A673 (cell line): ENCODE measurements at regions of chr14 and their contacts with region 1.

Region 1: GRCh38 chr14:64764641-64765520 is 60.7 kb downstream of the PLEKHG3 start:
- DNase-seq: peak; percentile 91
- H3K4me3 ChIP-seq: peak overlapping the region; percentile 38
- H3K27ac ChIP-seq: peak overlapping the region; percentile 56
- H3K4me1 ChIP-seq: peaks cover 42% of the 10 kb centered on the region
- H3K27me3 ChIP-seq: no peaks in the 10 kb centered on the region
- CTCF ChIP-seq: peak; percentile 87

Region 2: DNA sequence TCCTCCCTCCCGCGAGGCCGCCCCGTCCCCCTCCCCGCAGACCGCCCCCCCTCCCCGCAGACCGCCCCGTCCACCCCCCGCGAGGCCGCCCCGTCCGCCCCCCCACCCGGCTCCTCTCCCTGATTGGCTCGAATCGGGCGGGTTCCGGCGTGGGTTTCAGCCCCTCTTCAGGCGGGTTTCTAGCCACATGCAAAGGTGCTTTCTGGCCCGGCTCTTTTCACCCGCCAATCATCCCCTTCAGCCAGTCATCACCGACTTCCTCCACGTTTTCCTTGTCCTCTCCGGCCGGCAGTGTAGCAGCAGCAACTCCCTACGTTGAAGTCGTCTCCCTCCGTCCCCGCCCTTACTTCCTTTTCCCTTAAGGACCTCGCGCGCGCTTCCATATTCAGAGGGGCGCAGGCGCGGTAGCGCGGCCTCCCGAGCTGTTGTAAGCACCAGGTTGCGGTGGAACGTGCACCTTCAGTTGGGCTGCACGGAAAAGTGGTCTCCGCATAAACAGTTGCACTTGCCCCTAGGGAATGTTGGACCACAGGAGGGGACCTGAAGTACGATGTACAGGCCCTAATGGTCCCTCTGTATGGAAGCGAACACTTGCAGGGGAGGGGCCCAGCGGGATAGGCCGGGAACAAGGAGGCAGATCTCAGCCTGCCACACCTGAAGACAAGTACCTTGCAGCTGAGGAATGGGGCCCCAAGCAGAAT is 426.1 kb before region 1 on chr14:
- CTCF ChIA-PET with region 1: no interaction called
- POLR2A ChIA-PET with region 1: no interaction called
- intact Hi-C with region 1: loop called (anchors 5 kb)
- DNase-seq: peak; percentile 99
- H3K4me3 ChIP-seq: peak overlapping the region; percentile 79
- H3K27ac ChIP-seq: peak overlapping the region; percentile 94
- H3K4me1 ChIP-seq: peaks cover 10% of the 10 kb centered on the region
- H3K27me3 ChIP-seq: no peaks in the 10 kb centered on the region
- CTCF ChIP-seq: no peak

Region 3: DNA sequence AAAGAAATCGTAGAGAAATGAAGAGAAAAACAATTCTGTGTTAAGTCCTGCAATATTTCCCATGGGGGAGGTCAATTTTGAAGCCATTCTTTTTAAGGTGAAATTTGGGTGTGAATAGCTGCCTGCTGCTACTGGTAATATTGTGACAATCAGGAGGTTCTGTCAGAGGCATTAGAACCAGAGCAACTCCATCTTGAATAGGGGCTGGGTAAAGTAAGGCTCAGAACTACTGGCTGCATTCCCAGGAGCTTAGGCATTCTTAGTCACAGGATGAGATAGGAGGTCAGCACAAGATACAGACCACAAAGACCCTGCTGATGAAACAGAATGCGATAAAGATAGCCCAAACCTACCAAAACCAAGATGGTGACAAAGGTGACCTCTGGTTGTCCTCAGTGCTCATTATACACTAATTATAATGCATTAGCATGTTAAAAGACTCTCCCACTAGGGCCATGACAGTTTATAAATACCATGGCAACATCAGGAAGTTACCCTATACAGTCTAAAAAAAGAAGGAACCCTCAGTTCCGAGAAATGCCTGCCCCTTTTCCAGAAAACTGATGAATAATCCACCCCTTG is 401.5 kb before region 1 on chr14:
- CTCF ChIA-PET with region 1: no interaction called
- POLR2A ChIA-PET with region 1: no interaction called
- intact Hi-C with region 1: no loop called
- DNase-seq: no peak
- H3K4me3 ChIP-seq: no peak overlapping the region
- H3K27ac ChIP-seq: no peak overlapping the region
- H3K4me1 ChIP-seq: no peaks in the 10 kb centered on the region
- H3K27me3 ChIP-seq: no peaks in the 10 kb centered on the region
- CTCF ChIP-seq: no peak

Region 4: GRCh38 chr14:64540208-64541157 is 224.4 kb before region 1 on chr14 and contains the start of gene HSPA2:
- CTCF ChIA-PET with region 1: no interaction called
- POLR2A ChIA-PET with region 1: no interaction called
- intact Hi-C with region 1: loop called (anchors 10 kb)
- DNase-seq: peak; percentile 99
- H3K4me3 ChIP-seq: peak within 1 kb of the TSS; percentile 59
- H3K27ac ChIP-seq: peak within 1 kb of the TSS; percentile 76
- H3K4me1 ChIP-seq: no peaks in the 10 kb centered on the region
- H3K27me3 ChIP-seq: no peaks in the 10 kb centered on the region
- CTCF ChIP-seq: peak; percentile 86
- total RNA-seq, gene HSPA2: 13.8 and 14.3 TPM in 2 replicates

Region 5: DNA sequence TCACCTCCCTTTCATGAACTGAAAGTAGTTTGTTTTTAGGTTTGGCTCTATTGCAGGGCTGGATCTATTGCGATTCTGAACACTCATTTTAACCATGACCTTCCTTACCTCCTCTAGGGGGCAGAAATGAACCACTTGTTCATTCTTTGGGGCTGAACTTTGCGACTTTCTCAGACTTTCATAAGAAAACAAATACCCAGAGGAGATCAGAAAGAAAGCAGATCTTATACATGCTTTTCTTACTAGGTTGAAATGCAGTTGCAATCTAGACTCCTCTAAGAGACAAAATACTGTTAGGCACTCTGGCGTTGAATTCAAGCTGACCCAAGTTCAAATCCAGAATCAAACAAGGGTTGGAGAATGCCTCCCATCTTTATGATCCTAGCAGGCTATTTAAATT is 93.3 kb before region 1 on chr14:
- CTCF ChIA-PET with region 1: interaction called, 9 read pairs
- POLR2A ChIA-PET with region 1: no interaction called
- intact Hi-C with region 1: loop called (anchors 1 kb)
- DNase-seq: peak; percentile 80
- H3K4me3 ChIP-seq: no peak overlapping the region
- H3K27ac ChIP-seq: no peak overlapping the region
- H3K4me1 ChIP-seq: no peaks in the 10 kb centered on the region
- H3K27me3 ChIP-seq: no peaks in the 10 kb centered on the region
- CTCF ChIP-seq: peak; percentile 79

Region 6: GRCh38 chr14:64873506-64874219 is 108.8 kb after region 1 on chr14:
- CTCF ChIA-PET with region 1: no interaction called
- POLR2A ChIA-PET with region 1: no interaction called
- intact Hi-C with region 1: no loop called
- DNase-seq: no peak
- H3K4me3 ChIP-seq: no peak overlapping the region
- H3K27ac ChIP-seq: no peak overlapping the region
- H3K4me1 ChIP-seq: no peaks in the 10 kb centered on the region
- H3K27me3 ChIP-seq: peaks cover 27% of the 10 kb centered on the region
- CTCF ChIP-seq: no peak